Activated CD8-positive, alpha-beta T cell treated with anti-CD3 and anti-CD28 coated beads, Interleukin-2, amount 10 ng/mL, durations not matched to agents 7 days and 5 days (primary cell): ENCODE measurements at regions of chr19 and their contacts with region 1.

Region 1: DNA sequence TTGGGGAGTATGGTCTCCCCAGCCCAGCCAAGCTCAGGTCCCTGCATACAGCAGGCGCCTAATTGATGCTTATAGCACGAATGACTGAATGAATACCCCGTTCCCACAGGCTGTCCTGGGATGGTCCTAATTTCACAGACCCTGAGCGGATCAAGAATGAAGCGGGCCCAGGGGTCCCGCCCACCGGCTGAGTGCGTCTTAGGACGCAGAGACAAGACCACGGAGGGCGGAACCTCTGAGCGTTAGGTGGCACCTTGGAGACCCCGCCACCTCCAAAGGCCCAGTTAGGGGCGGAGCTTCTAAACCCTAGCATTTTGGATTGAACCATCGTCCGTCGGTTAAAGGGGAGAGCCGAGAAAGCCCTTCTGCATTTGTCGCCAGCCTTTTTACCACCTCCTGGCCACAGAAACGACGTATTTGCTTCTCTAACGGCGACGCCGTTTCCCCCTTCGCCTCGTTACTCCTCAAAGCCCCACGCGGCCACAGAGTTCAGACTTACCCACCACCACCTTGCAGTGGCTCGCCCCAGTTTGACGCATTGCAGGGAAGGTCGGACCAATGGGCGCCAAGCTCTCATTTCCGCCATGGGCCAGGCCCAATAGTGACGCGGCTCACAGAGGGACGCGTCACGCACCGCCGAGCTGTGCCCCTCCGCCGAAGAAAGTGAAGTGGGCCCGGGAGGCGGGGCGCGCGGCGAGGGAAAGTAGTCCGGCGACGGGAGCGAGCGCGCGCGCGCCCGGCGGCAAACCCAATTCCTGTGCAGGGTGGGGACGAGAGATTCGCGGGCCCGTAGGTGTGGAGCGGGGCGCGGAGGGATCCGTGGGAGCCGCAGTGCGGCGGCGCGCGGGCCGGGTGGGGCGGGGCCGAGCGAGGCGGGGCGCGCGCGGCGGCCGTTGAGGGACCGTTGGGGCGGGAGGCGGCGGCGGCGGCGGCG is 479 bp upstream of the CALM3 start:
- DNase-seq: peak; percentile 98
- ATAC-seq: peak; percentile 91
- H3K4me3 Mint-ChIP-seq: peak overlapping the region; percentile 100
- H3K27ac Mint-ChIP-seq: peak overlapping the region; percentile 100
- H3K4me1 Mint-ChIP-seq: peaks cover 37% of the 10 kb centered on the region
- H3K27me3 Mint-ChIP-seq: peaks cover 3% of the 10 kb centered on the region

Region 2: GRCh38 chr19:46520616-46521015 is 80.0 kb before region 1 on chr19:
- CTCF ChIA-PET with region 1: interaction called, 3 read pairs
- POLR2A ChIA-PET with region 1: interaction called, 17 read pairs
- DNase-seq: no peak
- ATAC-seq: no peak
- H3K4me3 Mint-ChIP-seq: no peak overlapping the region
- H3K27ac Mint-ChIP-seq: peak overlapping the region; percentile 67
- H3K4me1 Mint-ChIP-seq: peaks cover 73% of the 10 kb centered on the region
- H3K27me3 Mint-ChIP-seq: no peaks in the 10 kb centered on the region

Region 3: GRCh38 chr19:46564701-46565100 is 36.0 kb before region 1 on chr19:
- CTCF ChIA-PET with region 1: no interaction called
- POLR2A ChIA-PET with region 1: no interaction called
- DNase-seq: peak; percentile 15
- ATAC-seq: no peak
- H3K4me3 Mint-ChIP-seq: no peak overlapping the region
- H3K27ac Mint-ChIP-seq: no peak overlapping the region
- H3K4me1 Mint-ChIP-seq: peaks cover 2% of the 10 kb centered on the region
- H3K27me3 Mint-ChIP-seq: peaks cover 4% of the 10 kb centered on the region

Region 4: GRCh38 chr19:46579361-46579879 is 21.2 kb before region 1 on chr19:
- CTCF ChIA-PET with region 1: interaction called, 10 read pairs
- POLR2A ChIA-PET with region 1: interaction called, 5 read pairs
- DNase-seq: peak; percentile 52
- ATAC-seq: peak; percentile 42
- H3K4me3 Mint-ChIP-seq: no peak overlapping the region
- H3K27ac Mint-ChIP-seq: no peak overlapping the region
- H3K4me1 Mint-ChIP-seq: peaks cover 18% of the 10 kb centered on the region
- H3K27me3 Mint-ChIP-seq: peaks cover 7% of the 10 kb centered on the region

Region 5: DNA sequence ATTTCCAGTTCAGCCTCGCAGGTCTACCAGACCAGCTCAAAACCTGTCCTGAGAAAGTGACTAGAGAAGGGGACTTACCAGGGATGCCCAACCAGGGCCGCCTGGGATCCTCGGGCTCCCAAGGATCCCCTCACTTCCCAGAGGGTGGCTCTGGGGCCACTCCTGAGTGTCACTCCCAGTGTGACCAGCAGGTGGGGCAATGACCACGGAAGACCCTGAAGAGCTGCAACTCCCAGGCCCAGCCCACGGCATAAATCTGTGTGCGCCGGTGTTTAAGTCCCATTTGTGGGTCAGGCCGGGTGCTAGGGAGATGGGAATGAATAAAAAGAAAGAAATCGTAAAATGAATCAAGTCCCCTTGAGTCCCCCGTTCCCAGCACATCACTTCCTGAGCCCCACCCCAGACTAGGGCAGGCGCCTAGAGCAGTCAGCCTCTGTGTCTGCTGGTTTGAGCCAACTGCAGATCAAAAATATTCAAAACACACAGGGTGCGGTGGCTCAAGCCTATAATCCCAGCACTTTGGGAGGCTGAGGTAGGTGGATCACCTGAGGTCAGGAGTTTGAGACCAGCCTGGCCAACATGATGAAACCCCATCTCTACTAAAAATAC is 13.6 kb after region 1 on chr19:
- CTCF ChIA-PET with region 1: interaction called, 84 read pairs
- POLR2A ChIA-PET with region 1: interaction called, 84 read pairs
- DNase-seq: peak; percentile 88
- ATAC-seq: peak; percentile 52
- H3K4me3 Mint-ChIP-seq: no peak overlapping the region
- H3K27ac Mint-ChIP-seq: peak overlapping the region; percentile 78
- H3K4me1 Mint-ChIP-seq: peaks cover 81% of the 10 kb centered on the region
- H3K27me3 Mint-ChIP-seq: no peaks in the 10 kb centered on the region

Region 6: DNA sequence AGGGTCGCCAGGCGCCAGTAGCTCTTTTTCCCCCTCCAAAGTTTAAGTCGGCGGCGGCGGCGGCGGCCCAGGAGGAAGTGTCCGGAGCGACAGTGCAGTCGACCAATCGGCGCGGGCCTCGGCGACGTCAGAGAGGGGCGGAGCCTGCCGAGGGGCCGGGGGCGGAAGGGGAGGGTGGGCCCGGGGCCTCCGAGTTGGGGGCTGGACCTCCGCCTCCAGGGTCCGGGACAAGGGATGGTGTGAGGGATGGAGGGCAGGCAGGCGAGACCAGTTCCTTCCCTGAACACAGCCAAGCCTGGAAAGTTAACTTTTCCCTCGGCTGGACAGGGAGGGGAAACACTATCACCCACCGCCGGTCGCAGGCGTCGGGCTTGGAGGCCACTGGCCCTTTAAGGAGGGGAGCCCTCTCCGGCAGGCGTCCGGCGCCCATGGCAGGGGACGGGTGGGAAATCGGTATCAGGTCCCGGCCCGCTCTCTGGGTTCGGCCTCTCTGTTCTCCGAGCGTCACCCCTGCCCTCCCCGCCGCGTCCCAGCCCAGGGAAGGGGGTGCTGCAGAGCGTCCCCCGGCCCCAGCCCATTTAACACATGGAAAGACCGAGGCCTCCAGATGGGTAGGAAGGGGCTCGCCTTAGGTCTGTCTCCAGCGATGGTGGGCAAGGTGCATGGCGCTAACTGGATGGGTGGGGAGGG is 116.5 kb after region 1 on chr19 and contains the start of gene PRKD2:
- CTCF ChIA-PET with region 1: interaction called, 3 read pairs
- POLR2A ChIA-PET with region 1: interaction called, 15 read pairs
- DNase-seq: peak; percentile 93
- ATAC-seq: peak; percentile 43
- H3K4me3 Mint-ChIP-seq: peak within 1 kb of the TSS; percentile 94
- H3K27ac Mint-ChIP-seq: peak within 1 kb of the TSS; percentile 98
- H3K4me1 Mint-ChIP-seq: peaks cover 53% of the 10 kb centered on the region
- H3K27me3 Mint-ChIP-seq: no peaks in the 10 kb centered on the region
- total RNA-seq, gene PRKD2: 161 to 166 TPM